Activated CD8-positive, alpha-beta memory T cell treated with anti-CD3 and anti-CD28 coated beads, Interleukin-2, amount 10 ng/mL, durations not matched to agents 7 days and 5 days (primary cell): ENCODE measurements at regions of chr6 and their contacts with region 1.

Region 1: GRCh38 chr6:26309731-26310142 is 55.3 kb upstream of the BTN3A2 start:
- DNase-seq: peak; percentile 60
- ATAC-seq: peak; percentile 57
- H3K4me3 Mint-ChIP-seq: peak overlapping the region; percentile 23
- H3K27ac Mint-ChIP-seq: peak overlapping the region; percentile 85
- H3K4me1 Mint-ChIP-seq: peaks cover 72% of the 10 kb centered on the region
- H3K27me3 Mint-ChIP-seq: no peaks in the 10 kb centered on the region

Region 2: GRCh38 chr6:26141378-26141904 is 168.3 kb before region 1 on chr6:
- CTCF ChIA-PET with region 1: no interaction called
- DNase-seq: no peak
- ATAC-seq: no peak
- H3K4me3 Mint-ChIP-seq: no peak overlapping the region
- H3K27ac Mint-ChIP-seq: no peak overlapping the region
- H3K4me1 Mint-ChIP-seq: no peaks in the 10 kb centered on the region
- H3K27me3 Mint-ChIP-seq: no peaks in the 10 kb centered on the region

Region 3: DNA sequence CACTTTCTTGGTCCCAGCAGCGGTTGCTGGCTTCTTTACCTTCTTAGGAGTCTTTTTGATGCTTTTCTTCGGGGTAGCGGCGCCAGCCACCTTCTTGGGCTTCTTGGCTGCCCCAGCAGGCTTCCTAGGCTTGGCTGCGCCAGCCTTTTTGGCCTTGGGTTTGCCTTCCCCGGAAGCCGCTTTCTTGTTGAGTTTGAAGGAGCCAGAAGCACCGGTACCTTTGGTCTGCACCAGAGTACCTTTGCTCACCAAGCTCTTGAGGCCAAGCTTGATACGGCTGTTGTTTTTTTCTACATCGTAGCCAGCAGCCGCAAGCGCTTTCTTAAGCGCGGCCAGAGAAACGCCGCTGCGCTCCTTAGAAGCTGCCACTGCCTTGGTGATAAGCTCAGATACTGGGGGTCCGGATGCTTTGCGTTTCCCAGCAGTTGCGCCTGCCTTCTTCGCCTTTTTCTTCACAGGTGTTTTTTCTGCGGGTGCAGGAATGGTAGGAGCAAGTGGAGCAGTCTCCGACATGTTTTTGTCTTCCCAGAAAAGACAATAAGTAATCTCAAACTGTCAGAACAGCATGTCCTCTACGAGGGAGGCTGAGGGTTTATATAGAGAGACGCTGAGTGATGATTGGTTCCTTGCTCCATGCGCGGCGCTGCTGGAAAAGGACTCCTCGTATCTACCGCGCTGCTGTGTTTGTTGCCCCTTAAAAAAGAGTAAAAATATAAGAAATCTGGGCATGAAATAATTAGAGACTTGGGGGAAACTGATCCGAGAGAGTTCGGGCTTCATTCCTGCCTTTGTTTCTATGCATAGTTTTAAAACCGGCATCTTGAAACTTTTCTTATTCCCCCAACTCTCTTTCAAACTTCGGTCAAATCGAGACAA is 75.1 kb before region 1 on chr6:
- CTCF ChIA-PET with region 1: no interaction called
- DNase-seq: peak; percentile 89
- ATAC-seq: peak; percentile 67
- H3K4me3 Mint-ChIP-seq: peak overlapping the region; percentile 82
- H3K27ac Mint-ChIP-seq: peak overlapping the region; percentile 98
- H3K4me1 Mint-ChIP-seq: peaks cover 38% of the 10 kb centered on the region
- H3K27me3 Mint-ChIP-seq: peaks cover 2% of the 10 kb centered on the region

Region 4: DNA sequence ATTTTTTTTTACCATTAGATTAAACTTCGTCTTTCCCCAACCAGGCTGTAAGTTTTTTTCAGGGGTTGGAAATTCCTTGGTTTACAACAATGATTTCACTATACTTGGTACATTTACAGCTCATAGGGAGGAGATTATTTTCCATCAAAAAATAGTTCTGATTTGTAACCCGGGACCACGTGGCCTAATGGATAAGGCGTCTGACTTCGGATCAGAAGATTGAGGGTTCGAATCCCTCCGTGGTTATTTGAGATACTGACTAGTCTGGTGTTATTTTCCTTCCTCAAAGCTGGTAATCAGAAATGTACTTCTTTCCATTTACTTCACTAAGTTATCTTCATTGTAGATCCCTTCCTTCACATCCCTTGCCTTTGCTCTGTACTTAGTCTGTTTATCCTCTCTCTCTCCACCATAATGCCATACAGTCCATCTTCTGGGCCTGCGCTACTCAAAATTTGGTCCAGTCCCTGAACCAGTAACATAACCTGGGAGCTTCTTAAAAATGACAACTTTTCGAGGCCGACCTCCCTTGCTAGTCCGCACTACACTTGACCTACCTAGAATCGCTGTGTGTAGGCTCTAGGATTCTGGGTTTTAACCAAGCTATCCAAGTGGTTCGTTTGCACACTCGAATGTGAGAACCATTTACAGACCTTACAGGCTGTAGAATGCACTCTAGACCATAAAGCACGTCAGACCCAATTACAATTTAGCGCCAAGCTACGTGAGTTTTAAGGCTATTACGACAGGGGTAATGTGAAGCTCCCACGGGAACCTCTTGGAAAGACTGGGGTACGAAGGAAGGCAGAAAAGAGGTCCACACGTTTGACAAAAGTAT is 13.1 kb after region 1 on chr6:
- CTCF ChIA-PET with region 1: interaction called, 18 read pairs
- DNase-seq: peak; percentile 75
- ATAC-seq: peak; percentile 58
- H3K4me3 Mint-ChIP-seq: peak overlapping the region; percentile 89
- H3K27ac Mint-ChIP-seq: peak overlapping the region; percentile 87
- H3K4me1 Mint-ChIP-seq: peaks cover 50% of the 10 kb centered on the region
- H3K27me3 Mint-ChIP-seq: peaks cover 22% of the 10 kb centered on the region

Region 5: GRCh38 chr6:26493258-26493657 is 183.5 kb after region 1 on chr6:
- CTCF ChIA-PET with region 1: no interaction called
- DNase-seq: no peak
- ATAC-seq: peak; percentile 78
- H3K4me3 Mint-ChIP-seq: no peak overlapping the region
- H3K27ac Mint-ChIP-seq: no peak overlapping the region
- H3K4me1 Mint-ChIP-seq: peaks cover 24% of the 10 kb centered on the region
- H3K27me3 Mint-ChIP-seq: peaks cover 2% of the 10 kb centered on the region